ENCODE measurements at regions of chr5 and their contacts with region 1.

Region 1: GRCh38 chr5:132094393-132095076 is 20.9 kb downstream of the CSF2 start:
- DNase-seq: no peak
- ATAC-seq: no peak
- H3K4me3 Mint-ChIP-seq: no peak overlapping the region
- H3K27ac Mint-ChIP-seq: no peak overlapping the region
- H3K4me1 Mint-ChIP-seq: peaks cover 49% of the 10 kb centered on the region
- H3K27me3 Mint-ChIP-seq: no peaks in the 10 kb centered on the region

Region 2: GRCh38 chr5:132079619-132080018 is 14.9 kb before region 1 on chr5:
- CTCF ChIA-PET with region 1: interaction called, 10 read pairs
- DNase-seq: no peak
- ATAC-seq: no peak
- H3K4me3 Mint-ChIP-seq: no peak overlapping the region
- H3K27ac Mint-ChIP-seq: no peak overlapping the region
- H3K4me1 Mint-ChIP-seq: peaks cover 79% of the 10 kb centered on the region
- H3K27me3 Mint-ChIP-seq: no peaks in the 10 kb centered on the region

Measured in activated CD8-positive, alpha-beta memory T cell treated with anti-CD3 and anti-CD28 coated beads, Interleukin-2, amount 10 ng/mL, durations not matched to agents 7 days and 5 days (primary cell).